ENCODE measurements at regions of chr17 and their contacts with region 1.

Region 1: GRCh38 chr17:38982858-38983746 is 15.9 kb upstream of the FBXO47 start:
- H3K4me3 ChIP-seq: no peak overlapping the region
- H3K27ac ChIP-seq: no peak overlapping the region
- H3K4me1 ChIP-seq: peaks cover 6% of the 10 kb centered on the region
- CTCF ChIP-seq: peak; percentile 63; the same call in 1 of the 2 replicates

Region 2: GRCh38 chr17:38853292-38854219 is 129.5 kb before region 1 on chr17 and contains the start of gene RPL23:
- CTCF ChIA-PET with region 1: no interaction called
- POLR2A ChIA-PET with region 1: no interaction called
- H3K4me3 ChIP-seq: peak within 1 kb of the TSS; percentile 86
- H3K27ac ChIP-seq: peak within 1 kb of the TSS; percentile 99
- H3K4me1 ChIP-seq: peaks cover 3% of the 10 kb centered on the region
- CTCF ChIP-seq: no peak

Region 3: DNA sequence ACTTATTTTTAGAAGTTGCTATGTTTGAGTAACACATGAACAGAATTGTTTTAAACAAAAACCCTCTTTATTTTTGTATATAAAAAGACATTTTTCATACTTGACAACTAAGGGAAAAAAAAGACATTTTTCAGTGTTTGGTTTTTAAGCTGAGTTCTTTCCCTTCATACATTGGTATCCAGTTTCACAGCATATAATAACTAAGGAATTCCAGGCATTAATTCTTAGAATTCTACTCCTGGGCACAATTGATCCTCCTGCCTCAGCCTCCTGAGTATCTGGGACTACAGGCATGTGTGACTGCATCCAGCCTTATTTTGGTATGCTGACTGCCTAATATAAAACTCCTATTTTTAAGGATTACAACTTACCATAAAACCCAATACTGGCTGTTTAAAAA is 24.3 kb before region 1 on chr17:
- CTCF ChIA-PET with region 1: interaction called, 14 read pairs
- POLR2A ChIA-PET with region 1: no interaction called
- H3K4me3 ChIP-seq: no peak overlapping the region
- H3K27ac ChIP-seq: no peak overlapping the region
- H3K4me1 ChIP-seq: no peaks in the 10 kb centered on the region
- CTCF ChIP-seq: no peak

Region 4: GRCh38 chr17:39001703-39002637 is 18.9 kb after region 1 on chr17:
- CTCF ChIA-PET with region 1: interaction called, 18 read pairs
- POLR2A ChIA-PET with region 1: no interaction called
- H3K4me3 ChIP-seq: no peak overlapping the region
- H3K27ac ChIP-seq: no peak overlapping the region
- H3K4me1 ChIP-seq: no peaks in the 10 kb centered on the region
- CTCF ChIP-seq: no peak

Region 5: DNA sequence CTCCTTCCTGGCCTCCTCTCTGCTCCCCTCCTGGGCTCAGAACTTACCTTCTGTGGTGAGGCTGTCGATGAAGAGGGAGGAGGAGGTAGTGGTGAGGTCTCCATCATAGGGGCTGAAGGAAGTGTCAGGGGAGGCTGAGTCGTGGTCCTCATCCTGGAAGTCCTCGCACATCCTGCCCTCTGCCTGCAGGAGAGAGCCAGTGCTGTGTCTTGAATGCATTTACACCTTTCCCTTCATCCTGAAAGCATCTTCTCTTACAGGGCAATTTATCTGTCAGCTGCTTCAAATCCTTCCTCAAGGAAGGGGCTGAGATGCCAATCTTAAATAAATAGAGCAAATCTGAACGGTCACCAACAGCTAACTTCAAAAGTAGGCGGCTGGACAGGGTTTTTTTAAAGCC is 94.8 kb after region 1 on chr17:
- CTCF ChIA-PET with region 1: interaction called, 11 read pairs
- POLR2A ChIA-PET with region 1: no interaction called
- H3K4me3 ChIP-seq: no peak overlapping the region
- H3K27ac ChIP-seq: no peak overlapping the region
- H3K4me1 ChIP-seq: peaks cover 10% of the 10 kb centered on the region
- CTCF ChIP-seq: no peak; the same call in 1 of the 2 replicates

Region 6: GRCh38 chr17:39164675-39165143 is 181.6 kb after region 1 on chr17:
- CTCF ChIA-PET with region 1: interaction called, 58 read pairs
- POLR2A ChIA-PET with region 1: interaction called, 3 read pairs
- H3K4me3 ChIP-seq: no peak overlapping the region
- H3K27ac ChIP-seq: no peak overlapping the region
- H3K4me1 ChIP-seq: 0 out of 2 replicates have a peak, but pooled peaks cover 4% of the 10 kb centered on the region
- CTCF ChIP-seq: peak; percentile 90

Region 7: DNA sequence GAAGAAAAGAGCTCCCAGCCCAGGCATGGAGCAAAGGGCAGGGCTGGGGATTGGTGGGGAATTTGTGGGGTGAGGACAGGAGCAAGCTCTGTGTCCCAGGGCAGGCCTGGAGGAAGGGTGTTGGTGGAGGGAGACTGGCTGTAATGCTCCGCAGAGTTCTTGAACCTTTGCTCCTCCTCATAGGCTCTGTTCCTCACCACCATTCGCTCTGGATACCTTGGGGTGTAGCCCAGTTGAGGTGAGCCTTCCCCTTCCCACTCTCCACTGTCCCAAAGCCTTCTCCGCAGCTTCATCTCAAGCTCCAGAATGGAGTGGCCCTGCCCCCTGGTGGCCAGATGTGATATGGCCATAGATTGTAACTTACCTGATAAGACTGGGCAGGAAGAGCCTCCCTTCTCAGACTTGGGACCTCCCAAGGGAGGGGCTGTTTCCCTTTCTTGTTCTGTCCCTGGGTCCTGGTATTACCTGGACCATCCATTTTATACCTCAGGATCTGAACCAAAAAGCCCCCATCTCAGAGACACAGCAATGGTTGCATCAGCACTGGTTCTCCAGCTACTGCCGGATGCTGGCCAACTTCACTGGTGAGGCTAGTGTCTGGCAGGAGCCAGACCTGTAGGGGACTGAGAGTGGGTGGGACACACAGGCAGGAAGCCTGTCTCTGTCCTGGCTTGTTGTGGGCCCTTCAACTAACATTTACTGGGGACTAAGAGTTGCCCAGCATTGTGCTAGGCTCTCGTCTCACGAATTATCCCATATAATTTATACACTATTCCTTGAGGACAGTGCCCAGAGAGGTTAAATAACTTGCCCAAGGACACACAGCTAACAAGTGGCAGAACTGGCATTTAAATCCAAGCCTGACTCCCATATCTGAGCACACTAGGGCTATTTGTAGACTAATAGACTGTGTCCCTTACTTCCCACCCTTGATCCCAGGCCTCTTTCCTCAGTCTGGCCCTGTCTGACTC is 261.8 kb after region 1 on chr17:
- CTCF ChIA-PET with region 1: interaction called, 33 read pairs
- POLR2A ChIA-PET with region 1: no interaction called
- H3K4me3 ChIP-seq: no peak overlapping the region
- H3K27ac ChIP-seq: no peak overlapping the region
- H3K4me1 ChIP-seq: no peaks in the 10 kb centered on the region; the same call in 1 of the 2 replicates
- CTCF ChIP-seq: peak; percentile 91